ENCODE measurements at regions of chr3 and their contacts with region 1.

Region 1: DNA sequence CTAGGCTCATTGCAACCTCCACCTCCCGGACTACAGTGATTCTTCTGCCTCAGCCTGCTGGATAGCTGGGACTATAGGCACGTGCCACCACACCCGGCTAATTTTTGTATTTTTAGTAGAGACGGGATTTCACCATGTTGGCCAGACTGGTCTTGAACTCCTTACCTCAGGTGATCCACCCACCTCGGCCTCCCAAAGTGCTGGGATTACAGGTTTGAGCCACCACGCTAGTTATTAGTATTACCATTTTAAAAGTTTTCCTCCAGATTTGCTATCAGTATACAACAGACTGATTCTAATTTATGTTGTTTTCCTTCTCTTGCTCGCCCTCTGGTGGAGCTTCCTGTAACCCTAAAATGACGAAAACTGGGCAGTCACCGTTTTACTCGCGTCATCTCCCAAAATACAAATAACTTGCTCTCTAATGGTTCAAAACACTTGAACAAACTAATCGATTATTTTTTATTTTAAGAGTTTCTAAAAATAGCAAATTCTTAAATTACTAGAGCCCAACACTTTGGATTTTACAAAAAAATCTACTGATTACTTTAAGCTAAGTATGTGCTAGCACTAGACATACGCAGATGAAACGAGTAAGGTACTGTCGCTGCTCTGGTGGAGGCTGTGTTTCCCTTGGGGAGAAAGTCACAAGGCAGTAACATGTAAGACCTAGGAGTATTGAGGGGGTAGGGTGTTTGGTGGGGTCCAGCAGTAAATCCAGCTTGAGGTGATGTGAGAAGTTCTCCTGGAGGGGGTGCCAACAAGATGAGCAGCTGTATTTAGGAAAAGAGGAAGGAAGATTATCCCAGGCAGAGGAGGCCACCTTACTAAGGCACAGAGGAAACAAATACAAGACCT is 203.3 kb downstream of the MBNL1 start:
- DNase-seq: peak; percentile 52
- ATAC-seq: peak; percentile 86
- H3K4me3 ChIP-seq: peak overlapping the region in 2 of 3 experiments; percentile 18 to 35; a peak in 3 of 6 replicates
- H3K27ac ChIP-seq: no peak overlapping the region
- H3K4me1 ChIP-seq: no peaks in the 10 kb centered on the region
- H3K27me3 ChIP-seq: no peaks in the 10 kb centered on the region
- CTCF ChIP-seq: peak; percentile 74
- EP300 ChIP-seq: no peak
- POLR2A ChIP-seq: no peak
- RAD21 ChIP-seq: peak; percentile 25; the same call in 1 of the 2 replicates

Region 2: GRCh38 chr3:152071924-152072323 is 400.1 kb before region 1 on chr3:
- CTCF ChIA-PET with region 1: no interaction called
- POLR2A ChIA-PET with region 1: no interaction called
- in situ Hi-C with region 1: no loop called
- intact Hi-C with region 1: loop called (anchors 1 kb)
- DNase-seq: peak; percentile 19
- ATAC-seq: peak; percentile 77
- H3K4me3 ChIP-seq: no peak overlapping the region
- H3K27ac ChIP-seq: no peak overlapping the region
- H3K4me1 ChIP-seq: no peaks in the 10 kb centered on the region
- H3K27me3 ChIP-seq: no peaks in the 10 kb centered on the region
- CTCF ChIP-seq: peak; percentile 54
- EP300 ChIP-seq: no peak
- POLR2A ChIP-seq: no peak
- RAD21 ChIP-seq: no peak

Region 3: GRCh38 chr3:152183473-152183872 is 288.6 kb before region 1 on chr3:
- CTCF ChIA-PET with region 1: interaction called, 6 read pairs
- POLR2A ChIA-PET with region 1: no interaction called
- in situ Hi-C with region 1: no loop called
- intact Hi-C with region 1: loop called (anchors 1 kb)
- DNase-seq: peak; percentile 54
- ATAC-seq: peak; percentile 96
- H3K4me3 ChIP-seq: no peak overlapping the region
- H3K27ac ChIP-seq: no peak overlapping the region
- H3K4me1 ChIP-seq: no peaks in the 10 kb centered on the region
- H3K27me3 ChIP-seq: no peaks in the 10 kb centered on the region
- CTCF ChIP-seq: peak; percentile 80
- EP300 ChIP-seq: no peak
- POLR2A ChIP-seq: no peak
- RAD21 ChIP-seq: peak; percentile 86

Region 4: DNA sequence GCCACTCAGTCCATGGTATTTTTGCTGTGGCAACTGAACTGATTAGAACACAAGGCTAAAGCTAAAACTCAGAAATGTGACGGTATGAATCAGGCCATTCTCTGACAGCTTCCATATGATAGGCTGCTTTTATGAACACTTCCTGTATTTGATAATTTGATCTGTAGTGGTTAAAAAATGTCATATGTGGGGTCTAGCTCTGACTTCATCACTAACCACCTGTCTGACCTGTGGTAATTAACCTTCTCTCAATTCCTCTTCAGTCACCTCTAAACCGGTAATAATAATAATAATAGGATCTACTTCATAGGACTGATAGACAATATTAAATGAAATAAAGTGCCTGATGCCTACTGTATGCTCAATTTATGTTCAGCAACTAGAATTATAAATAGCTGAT is 19.9 kb after region 1 on chr3:
- CTCF ChIA-PET with region 1: no interaction called
- POLR2A ChIA-PET with region 1: no interaction called
- in situ Hi-C with region 1: no loop called
- intact Hi-C with region 1: no loop called
- DNase-seq: no peak
- ATAC-seq: no peak
- H3K4me3 ChIP-seq: no peak overlapping the region
- H3K27ac ChIP-seq: no peak overlapping the region
- H3K4me1 ChIP-seq: no peaks in the 10 kb centered on the region
- H3K27me3 ChIP-seq: no peaks in the 10 kb centered on the region
- CTCF ChIP-seq: no peak
- EP300 ChIP-seq: no peak
- POLR2A ChIP-seq: no peak
- RAD21 ChIP-seq: no peak

Region 5: DNA sequence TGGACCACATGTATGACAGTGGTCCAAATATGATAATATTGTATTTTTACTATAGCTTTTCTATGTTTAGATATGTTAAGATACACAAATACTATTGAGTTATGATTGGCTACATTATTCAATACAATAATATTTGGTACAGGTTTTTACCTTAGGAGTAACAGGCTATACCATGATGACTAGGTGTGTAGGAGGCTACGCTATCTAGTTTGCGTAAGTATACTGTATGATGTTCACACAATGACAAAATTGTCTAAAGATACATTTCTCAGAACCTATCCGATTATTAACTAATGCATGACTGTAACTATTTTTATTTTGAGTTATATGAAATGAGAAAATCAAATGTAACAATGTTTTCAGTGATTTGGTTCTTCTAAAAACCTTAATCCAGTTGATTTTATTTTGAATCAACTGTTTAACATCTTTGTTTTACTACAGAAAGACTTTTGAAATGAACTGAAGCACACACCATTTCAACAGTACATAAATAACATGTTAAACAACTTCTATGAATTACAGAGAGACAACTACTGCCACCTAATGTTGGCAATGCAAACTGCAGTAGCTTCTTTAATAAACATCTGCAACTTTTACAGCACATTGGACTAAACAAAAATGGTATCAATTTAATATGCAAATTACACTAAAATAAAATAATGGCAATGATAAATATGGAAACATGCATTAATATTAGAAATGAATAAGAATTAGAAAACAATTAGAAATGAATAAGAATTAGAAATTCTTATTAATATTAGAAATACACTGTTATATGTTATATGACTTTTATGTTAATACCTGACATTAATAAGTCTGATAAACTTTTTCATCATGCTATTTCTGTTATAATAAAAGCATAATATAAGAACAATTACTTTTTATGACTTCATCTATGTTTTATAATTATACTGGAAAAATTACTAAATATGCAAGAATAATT is 52.4 kb after region 1 on chr3:
- CTCF ChIA-PET with region 1: interaction called, 4 read pairs
- POLR2A ChIA-PET with region 1: no interaction called
- in situ Hi-C with region 1: no loop called
- intact Hi-C with region 1: loop called (anchors 1 kb)
- DNase-seq: peak; percentile 33
- ATAC-seq: peak; percentile 23; the same call in 1 of the 3 replicates
- H3K4me3 ChIP-seq: no peak overlapping the region
- H3K27ac ChIP-seq: no peak overlapping the region
- H3K4me1 ChIP-seq: no peaks in the 10 kb centered on the region
- H3K27me3 ChIP-seq: no peaks in the 10 kb centered on the region
- CTCF ChIP-seq: peak; percentile 68
- EP300 ChIP-seq: no peak
- POLR2A ChIP-seq: no peak
- RAD21 ChIP-seq: 0 out of 2 replicates have a peak, but pooled peaks have one; percentile 14

Region 6: DNA sequence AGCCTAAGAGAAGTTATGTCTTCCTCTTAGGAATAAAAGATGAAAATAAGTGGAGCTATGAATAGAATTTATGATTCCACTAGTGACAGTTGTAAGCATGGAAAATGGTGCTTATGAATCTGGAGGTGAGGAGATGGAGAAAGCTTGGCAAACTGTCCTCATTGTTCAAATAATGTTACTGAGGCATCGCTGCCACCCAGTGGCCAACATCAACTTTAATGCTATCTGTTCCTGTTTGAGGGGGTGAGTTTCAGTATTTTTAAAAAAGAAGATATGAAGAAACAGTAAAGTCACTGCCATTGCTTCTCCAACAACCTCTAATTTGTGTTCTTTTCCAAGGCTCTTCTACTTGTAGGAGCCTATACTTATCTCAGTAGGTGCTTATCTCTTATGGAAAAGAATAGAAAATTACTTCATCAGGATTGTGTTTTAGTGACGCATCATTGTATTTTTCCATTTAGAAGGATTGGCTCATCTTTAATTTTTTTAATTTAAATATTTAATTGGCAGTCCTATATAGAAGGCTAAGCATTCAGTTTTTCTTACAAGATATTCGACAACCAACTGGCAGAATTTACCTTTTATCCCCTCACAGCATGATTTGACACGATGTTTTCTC is 102.5 kb after region 1 on chr3:
- CTCF ChIA-PET with region 1: interaction called, 7 read pairs
- POLR2A ChIA-PET with region 1: no interaction called
- in situ Hi-C with region 1: loop called (anchors 10 kb)
- intact Hi-C with region 1: loop called (anchors 1 kb)
- DNase-seq: peak; percentile 26
- ATAC-seq: peak; percentile 81
- H3K4me3 ChIP-seq: no peak overlapping the region
- H3K27ac ChIP-seq: no peak overlapping the region
- H3K4me1 ChIP-seq: no peaks in the 10 kb centered on the region
- H3K27me3 ChIP-seq: no peaks in the 10 kb centered on the region
- CTCF ChIP-seq: peak; percentile 52
- EP300 ChIP-seq: no peak
- POLR2A ChIP-seq: no peak
- RAD21 ChIP-seq: no peak

Region 7: GRCh38 chr3:152961323-152961722 is 489.3 kb after region 1 on chr3:
- CTCF ChIA-PET with region 1: no interaction called
- POLR2A ChIA-PET with region 1: no interaction called
- in situ Hi-C with region 1: no loop called
- intact Hi-C with region 1: loop called (anchors 5 kb)
- DNase-seq: peak; percentile 19
- ATAC-seq: peak; percentile 73
- H3K4me3 ChIP-seq: no peak overlapping the region
- H3K27ac ChIP-seq: no peak overlapping the region
- H3K4me1 ChIP-seq: peaks cover 18% of the 10 kb centered on the region; the same call in 1 of the 2 replicates
- H3K27me3 ChIP-seq: no peaks in the 10 kb centered on the region
- CTCF ChIP-seq: peak; percentile 40; the same call in 1 of the 2 replicates
- EP300 ChIP-seq: no peak
- POLR2A ChIP-seq: no peak
- RAD21 ChIP-seq: no peak

Measured in HepG2 (cell line).